SK-N-SH (cell line): ENCODE measurements at regions of chr9 and their contacts with region 1.

Region 1: DNA sequence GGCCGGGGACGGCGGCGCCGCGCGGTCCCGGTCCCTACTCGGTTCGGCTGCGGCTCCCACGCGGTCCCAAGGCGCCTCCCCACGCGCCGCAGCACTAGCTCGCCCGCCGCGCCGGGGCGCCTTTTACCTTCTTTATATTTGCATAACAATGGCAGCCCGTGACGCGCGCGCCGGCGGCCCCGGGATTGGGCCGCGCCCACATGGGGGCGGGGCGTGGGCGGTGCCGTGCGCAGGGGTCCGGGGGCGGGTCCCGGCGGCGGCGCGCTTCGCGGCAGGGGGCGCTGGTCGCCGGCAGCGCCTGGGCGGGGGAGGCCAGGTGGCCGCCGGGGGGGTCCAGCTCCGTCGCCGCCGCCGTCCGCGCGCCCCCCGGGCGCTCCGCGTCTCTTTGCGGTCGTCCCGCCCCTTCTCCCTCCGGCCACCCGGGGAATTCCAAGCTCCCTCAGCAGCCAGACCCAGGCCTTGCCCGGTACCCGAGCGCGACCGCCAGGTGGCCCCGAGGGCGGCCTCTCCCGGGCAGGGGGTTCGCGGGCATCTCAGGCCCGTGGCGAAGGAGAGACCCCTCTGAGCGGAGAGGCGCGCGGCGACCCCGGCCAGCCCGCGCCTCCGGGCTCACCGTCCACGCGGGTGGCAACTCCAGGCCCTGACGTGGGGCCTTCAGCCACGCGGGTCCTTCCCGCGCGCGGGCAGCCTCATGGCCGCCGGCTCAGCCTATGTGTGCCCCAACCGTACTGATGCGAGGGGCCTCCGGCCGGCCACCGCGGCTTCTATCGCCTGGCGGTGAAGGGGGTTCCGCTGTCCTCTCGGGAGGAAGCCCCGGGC is at the start of gene NRARP:
- DNase-seq: peak; percentile 98
- H3K4me3 ChIP-seq: peak within 1 kb of the TSS; percentile 51 to 65
- H3K27ac ChIP-seq: peak within 1 kb of the TSS in 1 of 2 experiments; percentile 71; a peak in 2 of 4 replicates
- H3K4me1 ChIP-seq: peaks cover 0 to 21% of the 10 kb centered on the region in 2 experiments; a peak in 2 of 4 replicates
- H3K27me3 ChIP-seq: no peaks in the 10 kb centered on the region
- CTCF ChIP-seq: peak; percentile 58
- EP300 ChIP-seq: no peak
- RAD21 ChIP-seq: 0 out of 2 replicates have a peak, but pooled peaks have one; percentile 22
- polyA plus RNA-seq, gene NRARP: 3.9 and 4.2 TPM in 2 replicates

Region 2: GRCh38 chr9:137316012-137316976 is 13.9 kb after region 1 on chr9:
- CTCF ChIA-PET with region 1: interaction called, 74 read pairs
- POLR2A ChIA-PET with region 1: interaction called, 3 read pairs
- DNase-seq: peak; percentile 94
- H3K4me3 ChIP-seq: no peak overlapping the region; a peak in 1 of 4 replicates
- H3K27ac ChIP-seq: no peak overlapping the region
- H3K4me1 ChIP-seq: peaks cover 0 to 4% of the 10 kb centered on the region in 2 experiments; a peak in 1 of 4 replicates
- H3K27me3 ChIP-seq: no peaks in the 10 kb centered on the region
- CTCF ChIP-seq: no peak
- EP300 ChIP-seq: no peak
- RAD21 ChIP-seq: no peak

Region 3: DNA sequence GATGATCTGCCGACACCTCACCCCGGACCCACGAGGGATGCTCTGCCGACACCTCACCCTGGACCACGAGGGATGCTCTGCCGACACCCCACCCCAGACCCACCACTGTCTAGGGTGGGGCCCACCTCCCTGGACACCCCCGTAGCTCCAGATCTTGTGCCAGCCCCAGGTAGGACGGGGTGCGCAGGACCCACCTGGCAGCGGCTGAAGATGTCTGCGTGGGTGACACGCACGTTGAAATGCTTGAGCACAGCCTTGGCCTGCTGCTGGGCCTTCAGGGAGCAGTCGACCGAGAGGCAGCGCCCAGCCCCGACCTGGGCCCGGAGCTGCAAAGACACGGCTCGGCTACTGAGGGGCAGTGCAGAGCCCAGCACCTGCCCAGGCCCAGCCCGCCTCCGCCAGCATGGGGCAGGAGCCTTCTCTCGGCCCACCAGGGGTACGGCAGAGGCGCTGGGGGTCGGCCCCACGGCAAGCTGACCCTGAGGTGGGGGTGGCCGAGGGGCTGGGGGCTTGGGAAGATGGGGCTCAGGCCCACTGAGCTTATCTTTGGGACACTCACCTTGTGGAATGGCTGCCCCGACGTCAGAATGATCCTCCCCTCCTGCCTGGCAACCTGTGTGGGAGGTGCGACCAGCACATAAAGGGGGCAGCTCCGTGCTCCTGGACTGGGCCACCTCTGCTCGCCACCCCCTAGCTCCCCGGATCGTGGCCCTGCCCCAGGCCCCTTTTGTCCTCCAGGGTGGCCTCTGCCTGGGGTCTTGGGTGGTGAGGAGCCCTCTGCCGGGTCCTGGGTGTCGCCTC is 21.3 kb after region 1 on chr9:
- CTCF ChIA-PET with region 1: interaction called, 74 read pairs
- POLR2A ChIA-PET with region 1: no interaction called
- DNase-seq: no peak
- H3K4me3 ChIP-seq: no peak overlapping the region
- H3K27ac ChIP-seq: no peak overlapping the region
- H3K4me1 ChIP-seq: peaks cover 0 to 4% of the 10 kb centered on the region in 2 experiments; a peak in 1 of 4 replicates
- H3K27me3 ChIP-seq: no peaks in the 10 kb centered on the region
- CTCF ChIP-seq: no peak
- EP300 ChIP-seq: no peak
- RAD21 ChIP-seq: no peak